AG04449 (cell line): ENCODE measurements at regions of chr11 and their contacts with region 1.

Region 1: GRCh38 chr11:123246749-123247495 is 51.9 kb upstream of the CLMP start:
- DNase-seq: no peak
- H3K4me3 ChIP-seq: no peak overlapping the region
- CTCF ChIP-seq: peak; percentile 91

Region 2: DNA sequence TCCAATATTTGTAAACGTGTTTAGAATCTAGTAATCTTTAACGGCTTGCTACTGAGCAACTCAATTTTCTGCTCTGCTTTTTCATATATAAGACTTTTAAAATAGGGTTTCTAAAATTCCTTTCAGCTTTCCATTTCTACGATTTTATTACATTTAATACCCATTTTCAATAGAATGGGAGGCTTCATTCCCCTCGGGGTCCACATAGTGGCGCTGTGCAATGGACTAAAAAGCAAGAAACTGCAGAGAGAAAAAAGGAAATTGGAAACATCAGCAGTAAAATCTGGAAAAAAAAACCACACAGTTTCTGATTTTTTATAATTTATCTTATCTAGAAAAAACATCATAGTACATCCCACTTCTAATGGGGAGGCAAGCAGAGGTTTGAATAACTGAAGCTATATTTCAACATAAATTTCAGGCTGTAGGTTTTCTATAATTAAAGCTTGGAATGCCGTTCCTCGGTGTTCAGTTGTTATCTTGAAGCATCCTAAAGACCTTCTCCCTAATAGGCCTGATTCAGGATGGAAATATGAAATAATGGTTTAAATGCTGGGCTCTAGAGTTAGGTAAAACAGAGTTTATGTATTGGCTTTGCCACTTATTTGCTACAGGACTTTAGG is 383.1 kb before region 1 on chr11:
- CTCF ChIA-PET with region 1: no interaction called
- POLR2A ChIA-PET with region 1: no interaction called
- DNase-seq: no peak
- H3K4me3 ChIP-seq: no peak overlapping the region
- CTCF ChIP-seq: peak; percentile 61

Region 3: DNA sequence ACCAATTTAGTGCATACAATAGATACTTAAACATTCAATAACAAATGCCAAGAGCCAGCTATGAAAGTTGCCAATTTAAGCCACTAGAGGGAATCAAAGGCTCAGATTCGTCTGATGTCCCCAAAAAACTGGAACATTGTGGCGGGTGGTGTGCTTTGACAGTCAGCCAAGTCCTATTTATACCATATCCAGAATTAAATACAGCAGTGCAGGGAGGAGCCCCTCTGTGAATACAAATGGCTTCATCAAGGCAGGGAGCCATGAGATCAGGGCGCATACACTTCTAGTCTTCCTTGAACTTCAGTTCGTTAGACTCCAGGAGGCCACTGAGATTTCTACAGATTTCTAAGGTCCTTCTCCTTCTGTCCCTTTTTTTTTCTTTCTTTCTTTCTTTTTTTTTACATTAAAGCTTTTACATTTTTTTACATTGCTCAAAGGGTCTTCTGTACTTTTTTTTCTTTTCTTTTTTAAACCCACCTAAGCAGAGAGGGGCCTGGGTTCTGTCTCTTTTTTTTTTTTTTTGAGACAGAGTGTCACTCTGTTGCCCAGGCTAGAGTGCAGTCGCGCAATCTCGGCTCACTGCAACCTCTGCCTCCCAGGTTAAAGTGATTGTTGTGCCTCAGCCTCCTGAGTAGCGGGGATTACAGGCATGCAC is 143.5 kb before region 1 on chr11:
- CTCF ChIA-PET with region 1: interaction called, 683 read pairs
- POLR2A ChIA-PET with region 1: no interaction called
- DNase-seq: peak; percentile 45
- H3K4me3 ChIP-seq: no peak overlapping the region
- CTCF ChIP-seq: peak; percentile 48

Region 4: DNA sequence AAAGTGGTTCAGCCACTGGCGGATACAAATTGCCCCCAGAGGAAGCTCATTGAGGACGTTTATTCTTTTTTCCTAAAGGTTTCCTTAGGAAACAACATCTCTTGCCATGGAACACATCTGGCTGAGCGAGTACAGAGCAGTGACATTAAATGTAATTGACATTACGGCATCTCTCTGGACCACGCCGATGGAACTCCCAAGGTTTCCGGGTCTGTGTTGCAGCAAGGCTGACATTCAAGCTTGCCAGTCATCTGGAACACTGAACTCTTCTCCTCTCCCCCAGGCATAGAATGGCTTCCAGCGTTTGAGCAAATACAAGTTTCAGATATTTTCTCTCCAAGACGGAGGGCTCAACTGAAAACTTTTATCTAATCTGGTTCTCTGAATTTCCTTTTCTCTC is 94.0 kb before region 1 on chr11:
- CTCF ChIA-PET with region 1: interaction called, 13 read pairs
- POLR2A ChIA-PET with region 1: no interaction called
- DNase-seq: no peak
- H3K4me3 ChIP-seq: no peak overlapping the region
- CTCF ChIP-seq: no peak

Region 5: DNA sequence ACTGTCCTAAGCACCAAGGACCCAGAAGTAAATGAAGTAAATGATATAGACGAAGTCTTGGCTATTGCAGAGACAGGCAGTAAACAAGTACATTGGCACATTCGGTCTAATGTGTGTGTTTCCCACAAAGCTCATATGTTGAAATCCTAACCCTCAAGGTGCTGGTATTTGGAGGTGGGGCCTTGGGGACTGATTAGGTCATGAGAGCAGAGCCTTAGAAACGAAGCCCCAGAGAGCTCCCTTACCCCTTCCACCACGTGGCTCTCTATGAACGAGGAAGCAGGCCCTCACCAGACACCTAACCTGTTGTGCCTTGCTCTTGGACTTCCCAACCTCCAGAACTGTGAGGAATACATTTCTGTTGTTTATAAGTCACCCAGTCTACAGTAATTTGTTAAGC is 66.8 kb before region 1 on chr11:
- CTCF ChIA-PET with region 1: interaction called, 16 read pairs
- POLR2A ChIA-PET with region 1: no interaction called
- DNase-seq: no peak
- H3K4me3 ChIP-seq: no peak overlapping the region
- CTCF ChIP-seq: no peak

Region 6: DNA sequence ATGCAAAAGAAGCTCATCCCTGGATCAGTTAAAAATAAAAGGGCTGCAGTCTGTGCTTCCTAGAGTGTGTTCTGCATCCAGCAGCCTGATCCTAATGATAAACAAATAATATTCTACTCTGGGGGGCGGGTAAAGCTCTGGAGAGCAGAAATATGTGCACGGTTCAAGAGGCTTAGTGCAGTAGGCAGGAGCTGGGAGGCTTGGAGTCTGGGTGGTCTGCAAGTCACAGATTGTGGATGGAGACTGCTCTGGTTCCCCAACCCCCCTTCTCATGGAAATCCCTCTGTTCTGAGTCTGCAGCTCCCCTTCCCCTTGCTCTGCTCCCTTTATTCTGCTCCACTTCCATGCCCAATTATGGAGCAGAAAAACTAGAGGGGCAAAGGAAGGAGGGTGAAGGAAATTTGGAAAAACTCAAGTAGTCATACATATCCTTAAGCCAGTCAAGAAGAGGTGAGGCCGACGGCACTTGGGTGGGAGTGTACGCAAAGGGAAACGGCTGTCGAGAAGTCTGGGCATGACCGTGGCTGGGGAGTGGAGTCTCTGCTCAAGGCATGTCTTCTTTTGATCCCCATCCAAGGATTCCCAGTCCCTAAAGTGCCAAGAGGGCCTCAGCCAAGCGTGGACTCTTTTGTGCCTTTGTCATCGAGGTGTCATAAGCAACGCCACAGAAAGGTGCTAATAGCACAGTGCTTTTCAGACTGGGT is 35.6 kb before region 1 on chr11:
- CTCF ChIA-PET with region 1: interaction called, 24 read pairs
- POLR2A ChIA-PET with region 1: no interaction called
- DNase-seq: no peak
- H3K4me3 ChIP-seq: no peak overlapping the region
- CTCF ChIP-seq: no peak

Region 7: DNA sequence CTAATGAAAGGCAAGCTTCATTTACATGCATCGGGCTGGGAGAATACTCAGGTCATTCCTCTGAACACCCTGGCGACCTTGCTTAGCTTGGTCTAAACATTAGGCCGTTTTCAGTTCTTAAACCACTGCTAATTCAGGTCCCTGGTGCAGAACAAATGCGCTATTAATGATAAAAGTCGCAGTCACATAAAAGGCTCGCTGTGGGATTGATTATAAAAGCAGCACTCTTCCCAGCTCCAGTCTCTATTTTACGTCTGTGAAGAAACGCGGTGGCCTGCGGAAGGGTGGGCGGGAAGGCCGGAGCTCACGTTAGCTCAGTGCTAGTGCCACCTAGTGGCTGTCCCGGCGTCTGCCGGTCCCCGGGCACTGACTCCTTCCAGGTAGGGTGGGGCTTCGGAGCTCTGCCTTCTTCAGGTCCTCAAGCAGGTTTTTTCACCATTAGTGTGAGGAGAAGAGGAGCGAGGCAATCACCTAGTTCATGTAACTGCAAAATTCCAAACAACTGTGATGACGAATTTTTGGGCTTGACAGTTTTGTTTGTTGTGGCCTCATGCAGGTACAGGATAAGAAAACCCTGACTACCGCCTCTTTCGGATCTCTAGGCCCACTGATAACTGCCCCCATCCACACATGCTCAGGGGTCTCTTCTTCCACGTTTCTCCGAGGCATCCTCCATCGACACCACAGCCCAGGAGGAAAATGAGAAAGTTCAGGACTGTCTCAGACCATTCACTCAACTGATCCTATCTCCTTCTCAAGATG is 14.6 kb after region 1 on chr11:
- CTCF ChIA-PET with region 1: interaction called, 76 read pairs
- POLR2A ChIA-PET with region 1: no interaction called
- DNase-seq: no peak
- H3K4me3 ChIP-seq: 0 out of 2 replicates have a peak overlapping the region, but pooled peaks have one; percentile 8
- CTCF ChIP-seq: peak; percentile 94

Region 8: DNA sequence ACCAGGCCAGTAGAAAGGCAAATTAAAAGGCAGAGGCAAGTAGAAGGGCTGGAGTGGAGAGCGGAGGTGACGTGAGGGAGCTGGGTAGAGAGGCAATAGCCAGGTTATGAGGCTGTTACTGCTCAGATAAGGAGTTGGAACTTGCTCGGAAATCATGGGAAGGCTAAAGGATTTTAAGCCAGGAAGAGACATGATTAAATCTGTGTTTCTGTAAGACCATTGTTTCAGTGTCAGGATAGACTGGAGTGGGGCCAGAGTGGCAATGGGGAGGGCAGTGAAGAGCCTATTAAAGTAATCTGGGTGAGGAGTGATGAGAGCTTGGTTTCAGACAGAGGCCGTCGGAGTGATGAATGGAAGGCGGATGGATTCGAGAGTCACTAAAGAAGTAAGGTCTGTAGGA is 222.2 kb after region 1 on chr11:
- CTCF ChIA-PET with region 1: no interaction called
- POLR2A ChIA-PET with region 1: no interaction called
- DNase-seq: no peak
- H3K4me3 ChIP-seq: no peak overlapping the region
- CTCF ChIP-seq: no peak

Region 9: DNA sequence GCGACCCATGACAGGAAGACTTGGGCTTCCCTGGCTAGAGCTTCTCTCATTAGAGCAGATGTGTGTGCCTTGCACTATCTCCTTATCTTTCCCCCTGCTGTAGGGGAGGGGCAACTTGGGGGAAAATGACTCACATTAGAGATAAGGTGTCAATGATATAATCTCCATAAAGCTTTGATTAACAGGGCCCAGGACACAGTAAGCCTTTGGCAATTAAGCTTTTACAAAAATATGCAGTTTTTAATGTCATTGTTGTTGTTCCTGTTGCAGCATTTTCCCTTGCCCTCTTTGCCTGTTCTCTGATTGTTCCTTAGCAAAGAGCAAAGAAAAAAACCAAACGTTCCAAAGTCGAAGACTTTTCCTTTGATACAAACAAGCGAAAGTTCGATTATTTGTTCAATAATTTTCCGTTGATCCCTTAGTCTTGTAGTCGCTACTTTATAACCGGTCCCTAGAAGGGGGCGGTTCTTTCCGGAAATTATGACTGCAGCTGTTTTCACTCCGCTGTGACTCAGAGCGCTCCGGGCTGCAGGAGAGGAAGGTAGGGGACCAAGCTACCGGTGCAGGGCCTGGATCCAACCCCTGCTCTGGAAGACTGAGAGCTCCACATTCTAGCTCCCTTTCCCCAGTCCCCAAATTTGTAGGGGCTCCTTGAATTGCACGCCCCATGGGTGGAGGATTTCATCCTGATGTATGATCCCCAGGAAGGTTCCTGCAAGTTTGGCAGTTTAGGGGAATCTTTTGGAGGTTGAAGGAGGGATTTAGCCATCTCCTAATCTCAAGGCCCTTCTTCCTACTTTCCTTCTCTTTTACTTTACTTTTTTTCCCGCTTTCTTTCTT is 868.2 kb after region 1 on chr11 and contains the start of gene VWA5A:
- CTCF ChIA-PET with region 1: no interaction called
- POLR2A ChIA-PET with region 1: no interaction called
- DNase-seq: peak; percentile 44
- H3K4me3 ChIP-seq: peak within 1 kb of the TSS; percentile 71
- CTCF ChIP-seq: no peak